Endothelial cell of umbilical vein (primary cell): ENCODE measurements at regions of chr1 and their contacts with region 1.

Region 1: GRCh38 chr1:2133039-2133878 is 61.3 kb downstream of the FAAP20 start:
- DNase-seq: peak; percentile 96
- H3K4me3 ChIP-seq: peak overlapping the region in 2 of 3 experiments; percentile 30 to 39
- H3K27ac ChIP-seq: peak overlapping the region; percentile 31
- H3K4me1 ChIP-seq: peaks cover 4% of the 10 kb centered on the region
- H3K27me3 ChIP-seq: no peaks in the 10 kb centered on the region
- CTCF ChIP-seq: no peak
- POLR2A ChIP-seq: no peak

Region 2: DNA sequence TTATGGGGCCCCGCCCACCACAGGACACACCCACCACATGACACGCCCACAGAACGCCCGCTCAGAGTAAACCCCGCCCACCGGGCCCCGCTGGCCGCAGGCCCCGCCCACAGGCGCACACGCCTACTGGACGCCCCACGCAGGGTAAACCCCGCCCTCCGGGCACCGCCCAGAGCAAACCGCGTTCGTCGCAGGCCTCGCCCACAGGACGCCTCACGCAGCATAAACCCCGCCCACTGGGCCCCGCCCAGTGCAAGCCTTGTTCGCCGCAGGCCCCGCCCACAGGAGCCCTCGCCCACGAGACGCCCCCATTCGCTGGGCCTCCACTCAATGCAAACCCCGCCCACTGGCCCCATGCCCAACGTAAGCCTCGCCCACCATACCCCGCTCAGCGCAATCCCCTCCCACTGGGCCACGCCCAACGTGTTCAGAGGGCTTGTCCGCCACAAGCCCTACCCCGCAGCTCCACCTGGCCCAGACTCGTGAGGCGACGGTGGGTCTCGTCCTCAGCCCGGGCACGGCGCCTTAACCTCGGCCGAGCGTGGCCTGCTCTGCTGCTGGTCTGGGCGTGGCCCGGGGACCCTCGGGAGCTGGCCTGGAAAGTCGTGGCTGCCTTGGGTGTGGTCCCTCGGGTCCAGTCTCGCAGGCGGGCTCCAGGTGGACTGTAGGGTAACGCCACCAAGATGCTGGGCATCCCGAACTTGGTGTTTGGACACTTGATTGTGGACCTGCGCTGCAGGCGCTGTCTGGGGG is 213.8 kb before region 1 on chr1:
- CTCF ChIA-PET with region 1: no interaction called
- POLR2A ChIA-PET with region 1: no interaction called
- dilution Hi-C with region 1: no loop called
- intact Hi-C with region 1: loop called (anchors 10 kb)
- DNase-seq: peak; percentile 98
- H3K4me3 ChIP-seq: peak overlapping the region in 2 of 3 experiments; percentile 40 to 42
- H3K27ac ChIP-seq: no peak overlapping the region
- H3K4me1 ChIP-seq: peaks cover 5% of the 10 kb centered on the region
- H3K27me3 ChIP-seq: no peaks in the 10 kb centered on the region
- CTCF ChIP-seq: no peak
- POLR2A ChIP-seq: no peak

Region 3: GRCh38 chr1:2148691-2149090 is 15.4 kb after region 1 on chr1:
- CTCF ChIA-PET with region 1: no interaction called
- POLR2A ChIA-PET with region 1: interaction called, 3 read pairs
- dilution Hi-C with region 1: no loop called
- intact Hi-C with region 1: loop called (anchors 1 kb)
- DNase-seq: peak; percentile 29
- H3K4me3 ChIP-seq: no peak overlapping the region
- H3K27ac ChIP-seq: peak overlapping the region; percentile 21
- H3K4me1 ChIP-seq: peaks cover 12% of the 10 kb centered on the region
- H3K27me3 ChIP-seq: no peaks in the 10 kb centered on the region
- CTCF ChIP-seq: no peak
- POLR2A ChIP-seq: no peak

Region 4: GRCh38 chr1:2163205-2163604 is 29.9 kb after region 1 on chr1:
- CTCF ChIA-PET with region 1: interaction called, 11 read pairs
- POLR2A ChIA-PET with region 1: no interaction called
- dilution Hi-C with region 1: no loop called
- intact Hi-C with region 1: no loop called
- DNase-seq: no peak
- H3K4me3 ChIP-seq: no peak overlapping the region
- H3K27ac ChIP-seq: no peak overlapping the region
- H3K4me1 ChIP-seq: no peaks in the 10 kb centered on the region
- H3K27me3 ChIP-seq: no peaks in the 10 kb centered on the region
- CTCF ChIP-seq: no peak
- POLR2A ChIP-seq: no peak

Region 5: GRCh38 chr1:2189459-2190425 is 56.5 kb after region 1 on chr1:
- CTCF ChIA-PET with region 1: interaction called, 7 read pairs
- POLR2A ChIA-PET with region 1: interaction called, 3 read pairs
- dilution Hi-C with region 1: no loop called
- intact Hi-C with region 1: loop called (anchors 1 kb)
- DNase-seq: peak; percentile 96
- H3K4me3 ChIP-seq: peak overlapping the region; percentile 39 to 54 (median 39)
- H3K27ac ChIP-seq: peak overlapping the region; percentile 78
- H3K4me1 ChIP-seq: peaks cover 18% of the 10 kb centered on the region
- H3K27me3 ChIP-seq: no peaks in the 10 kb centered on the region
- CTCF ChIP-seq: no peak
- POLR2A ChIP-seq: peak; percentile 78

Region 6: DNA sequence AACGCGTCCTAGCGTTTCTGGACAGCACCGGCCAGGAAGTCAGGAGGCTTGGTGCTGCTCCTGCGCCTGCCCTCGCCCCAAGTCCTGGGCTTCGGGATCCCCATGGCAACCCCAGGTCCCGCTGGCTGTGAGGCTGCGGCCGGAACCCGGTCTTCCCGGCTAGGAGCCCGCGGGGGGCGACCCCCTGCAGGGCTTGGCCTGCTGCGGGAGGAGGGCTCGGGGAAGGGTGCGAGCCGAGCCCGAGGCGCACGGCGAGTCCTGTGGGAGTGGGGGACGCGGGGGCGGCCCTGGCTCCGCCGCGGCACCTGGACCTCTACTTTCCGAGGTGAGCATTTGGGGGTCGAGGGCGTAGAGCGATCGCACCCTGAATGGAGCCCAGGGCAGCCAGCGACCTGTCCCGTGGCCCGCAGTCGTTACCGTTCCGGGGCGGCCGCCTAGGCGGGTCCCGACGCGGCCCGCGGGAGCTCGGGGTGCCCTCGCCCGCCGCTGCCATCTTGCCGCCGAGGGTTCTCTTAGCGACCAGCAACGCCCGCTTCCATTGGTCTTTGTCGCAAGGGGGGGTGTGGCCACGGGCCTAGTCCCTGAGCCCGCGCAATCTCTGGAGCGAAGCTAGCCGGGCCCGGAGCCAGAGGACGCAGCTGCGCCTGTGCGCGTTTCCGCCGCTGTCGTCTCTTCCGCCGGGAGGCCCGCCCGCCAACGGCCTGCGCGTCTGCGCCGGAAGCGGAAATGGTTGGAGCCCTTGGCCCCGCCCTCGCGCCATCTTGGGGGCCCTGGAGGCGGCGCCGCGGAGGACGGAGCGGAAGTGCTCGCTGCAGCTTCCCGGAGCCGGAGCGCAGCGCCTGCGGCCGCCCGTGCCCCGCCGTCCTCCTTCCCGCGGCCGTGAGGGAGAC is 258.0 kb after region 1 on chr1 and contains the starts of genes MORN1 and RER1:
- CTCF ChIA-PET with region 1: no interaction called
- POLR2A ChIA-PET with region 1: no interaction called
- dilution Hi-C with region 1: no loop called
- intact Hi-C with region 1: loop called (anchors 1 kb)
- DNase-seq: peak; percentile 100
- H3K4me3 ChIP-seq: peak within 1 kb of the TSS; percentile 80 to 92 (median 88)
- H3K27ac ChIP-seq: peak within 1 kb of the TSS; percentile 77
- H3K4me1 ChIP-seq: peaks cover 16% of the 10 kb centered on the region
- H3K27me3 ChIP-seq: no peaks in the 10 kb centered on the region
- CTCF ChIP-seq: no peak
- POLR2A ChIP-seq: peak; percentile 55
- total RNA-seq, gene MORN1: 6.4 and 6.5 TPM in 2 replicates
- total RNA-seq, gene RER1: 174 and 179 TPM in 2 replicates